Kidney (tissue), 22 donors: ENCODE measurements at regions of chr12 and their contacts with region 1.

Region 1: GRCh38 chr12:105053116-105053572 is 31.1 kb downstream of the ALDH1L2 start:
- DNase-seq: peak in 4 of 5 donors; percentile 66 to 88 (median 78)
- H3K4me3 ChIP-seq: no peak overlapping the region
- H3K27ac ChIP-seq: no peak overlapping the region
- H3K4me1 ChIP-seq: no peaks in the 10 kb centered on the region
- H3K27me3 ChIP-seq: no peaks in the 10 kb centered on the region
- CTCF ChIP-seq: peak; percentile 89

Region 2: GRCh38 chr12:104371043-104371870 is 681.9 kb before region 1 on chr12:
- intact Hi-C with region 1: loop called (anchors 10 kb)
- DNase-seq: no peak
- H3K4me3 ChIP-seq: no peak overlapping the region
- H3K27ac ChIP-seq: no peak overlapping the region
- H3K4me1 ChIP-seq: no peaks in the 10 kb centered on the region
- H3K27me3 ChIP-seq: no peaks in the 10 kb centered on the region
- CTCF ChIP-seq: no peak